ENCODE measurements at regions of chr7 and their contacts with region 1.

Region 1: GRCh38 chr7:85041605-85042216 is 145.1 kb downstream of the SEMA3D start:
- DNase-seq: peak; percentile 83
- H3K4me3 ChIP-seq: no peak overlapping the region
- H3K27ac ChIP-seq: no peak overlapping the region
- H3K4me1 ChIP-seq: no peaks in the 10 kb centered on the region
- H3K27me3 ChIP-seq: no peaks in the 10 kb centered on the region
- CTCF ChIP-seq: peak; percentile 60 to 70
- POLR2A ChIP-seq: no peak

Region 2: GRCh38 chr7:85054306-85054705 is 12.6 kb after region 1 on chr7:
- CTCF ChIA-PET with region 1: interaction called, 10 read pairs
- POLR2A ChIA-PET with region 1: no interaction called
- dilution Hi-C with region 1: no loop called
- intact Hi-C with region 1: no loop called
- DNase-seq: no peak
- H3K4me3 ChIP-seq: no peak overlapping the region
- H3K27ac ChIP-seq: no peak overlapping the region
- H3K4me1 ChIP-seq: no peaks in the 10 kb centered on the region
- H3K27me3 ChIP-seq: no peaks in the 10 kb centered on the region
- CTCF ChIP-seq: no peak
- POLR2A ChIP-seq: no peak

Region 3: GRCh38 chr7:85162721-85163120 is 121.0 kb after region 1 on chr7:
- CTCF ChIA-PET with region 1: interaction called, 14 read pairs
- POLR2A ChIA-PET with region 1: no interaction called
- dilution Hi-C with region 1: no loop called
- intact Hi-C with region 1: no loop called
- DNase-seq: peak; percentile 47
- H3K4me3 ChIP-seq: peak overlapping the region in 1 of 3 experiments; percentile 15
- H3K27ac ChIP-seq: no peak overlapping the region
- H3K4me1 ChIP-seq: peaks cover 22% of the 10 kb centered on the region
- H3K27me3 ChIP-seq: no peaks in the 10 kb centered on the region
- CTCF ChIP-seq: no peak
- POLR2A ChIP-seq: no peak

Region 4: DNA sequence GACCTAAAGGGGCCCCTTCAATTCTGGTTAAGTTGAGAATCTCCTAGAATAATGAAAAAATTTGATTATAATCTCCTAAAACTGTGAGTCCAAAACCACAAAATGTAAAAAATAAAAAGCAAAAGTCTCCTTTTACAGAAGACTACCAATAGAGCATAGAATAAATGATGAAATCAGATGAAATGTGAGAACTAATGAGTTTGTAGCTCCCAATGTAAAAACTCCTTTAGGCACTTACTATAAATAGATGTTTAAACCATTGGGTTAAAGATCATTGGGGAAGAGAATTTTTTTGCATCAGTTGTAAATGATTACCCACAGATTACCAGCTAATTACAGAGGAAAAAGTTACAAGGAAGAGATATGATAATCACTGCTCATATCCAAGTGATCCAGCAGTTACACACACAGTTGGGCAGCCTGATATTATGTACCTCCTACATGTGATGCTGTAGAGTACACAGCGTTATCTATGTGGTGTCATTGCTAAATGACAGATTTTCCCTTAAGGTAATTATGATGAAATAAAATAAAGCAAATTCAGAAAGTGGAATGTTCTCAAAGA is 427.8 kb after region 1 on chr7:
- CTCF ChIA-PET with region 1: interaction called, 49 read pairs
- POLR2A ChIA-PET with region 1: no interaction called
- dilution Hi-C with region 1: no loop called
- intact Hi-C with region 1: no loop called
- DNase-seq: no peak
- H3K4me3 ChIP-seq: no peak overlapping the region
- H3K27ac ChIP-seq: no peak overlapping the region
- H3K4me1 ChIP-seq: no peaks in the 10 kb centered on the region
- H3K27me3 ChIP-seq: no peaks in the 10 kb centered on the region
- CTCF ChIP-seq: no peak
- POLR2A ChIP-seq: no peak

Region 5: GRCh38 chr7:85829817-85830432 is 788.2 kb after region 1 on chr7:
- CTCF ChIA-PET with region 1: interaction called, 34 read pairs
- POLR2A ChIA-PET with region 1: no interaction called
- dilution Hi-C with region 1: no loop called
- intact Hi-C with region 1: no loop called
- DNase-seq: no peak
- H3K4me3 ChIP-seq: no peak overlapping the region
- H3K27ac ChIP-seq: no peak overlapping the region
- H3K4me1 ChIP-seq: no peaks in the 10 kb centered on the region
- H3K27me3 ChIP-seq: no peaks in the 10 kb centered on the region
- CTCF ChIP-seq: no peak
- POLR2A ChIP-seq: no peak

Measured in endothelial cell of umbilical vein (primary cell).